ENCODE measurements at regions of chr16 and their contacts with region 1.

Region 1: DNA sequence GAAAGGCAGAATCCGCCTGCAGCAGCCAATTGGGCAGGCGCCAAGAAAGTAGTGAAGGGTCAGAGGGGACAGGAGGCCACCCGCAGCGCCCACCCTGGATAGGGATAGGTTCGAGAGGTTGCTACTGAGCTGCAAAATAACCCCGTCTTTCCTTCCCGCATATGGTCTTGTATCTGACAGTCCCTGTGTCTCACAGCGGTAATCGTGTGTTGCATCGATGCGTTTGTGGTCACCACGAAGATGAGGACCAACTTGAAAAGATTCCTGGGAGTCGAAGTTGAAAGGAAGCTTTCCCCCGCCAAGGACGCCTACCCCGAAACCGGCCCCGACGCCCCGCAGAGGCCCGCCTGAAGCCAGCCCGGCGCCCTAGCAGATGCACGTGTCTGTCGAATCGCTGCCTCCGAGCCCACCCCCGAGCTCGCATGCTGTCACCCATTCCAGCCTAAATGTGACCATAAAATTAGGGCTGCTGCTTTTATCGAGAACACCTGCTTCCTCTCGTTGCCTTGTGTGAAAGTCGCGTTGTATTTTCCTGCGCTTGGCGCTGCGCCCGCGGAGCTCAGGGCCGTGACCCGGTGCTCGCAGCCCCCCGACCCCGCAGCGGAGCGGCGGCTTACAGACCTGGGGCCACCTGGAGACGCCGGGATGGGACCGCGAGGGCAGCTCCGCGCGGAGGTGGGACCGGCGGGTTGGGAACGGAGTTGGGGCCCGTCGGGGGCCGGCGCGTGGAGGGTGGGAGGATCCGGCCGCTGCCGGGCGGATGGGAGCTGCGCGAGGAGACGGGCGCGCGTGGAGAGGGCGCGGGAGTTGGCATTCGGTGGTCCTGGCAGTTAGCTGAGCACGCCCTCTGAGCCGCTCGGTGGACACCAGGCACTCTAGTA is at the start of gene CMTM2:
- DNase-seq: no peak
- H3K4me3 Mint-ChIP-seq: peak within 1 kb of the TSS; percentile 16
- H3K27ac Mint-ChIP-seq: no peak within 1 kb of the TSS
- H3K4me1 Mint-ChIP-seq: peaks cover 13% of the 10 kb centered on the region
- H3K27me3 Mint-ChIP-seq: peaks cover 40% of the 10 kb centered on the region
- total RNA-seq, gene CMTM2: 0.73 to 0.97 TPM

Region 2: DNA sequence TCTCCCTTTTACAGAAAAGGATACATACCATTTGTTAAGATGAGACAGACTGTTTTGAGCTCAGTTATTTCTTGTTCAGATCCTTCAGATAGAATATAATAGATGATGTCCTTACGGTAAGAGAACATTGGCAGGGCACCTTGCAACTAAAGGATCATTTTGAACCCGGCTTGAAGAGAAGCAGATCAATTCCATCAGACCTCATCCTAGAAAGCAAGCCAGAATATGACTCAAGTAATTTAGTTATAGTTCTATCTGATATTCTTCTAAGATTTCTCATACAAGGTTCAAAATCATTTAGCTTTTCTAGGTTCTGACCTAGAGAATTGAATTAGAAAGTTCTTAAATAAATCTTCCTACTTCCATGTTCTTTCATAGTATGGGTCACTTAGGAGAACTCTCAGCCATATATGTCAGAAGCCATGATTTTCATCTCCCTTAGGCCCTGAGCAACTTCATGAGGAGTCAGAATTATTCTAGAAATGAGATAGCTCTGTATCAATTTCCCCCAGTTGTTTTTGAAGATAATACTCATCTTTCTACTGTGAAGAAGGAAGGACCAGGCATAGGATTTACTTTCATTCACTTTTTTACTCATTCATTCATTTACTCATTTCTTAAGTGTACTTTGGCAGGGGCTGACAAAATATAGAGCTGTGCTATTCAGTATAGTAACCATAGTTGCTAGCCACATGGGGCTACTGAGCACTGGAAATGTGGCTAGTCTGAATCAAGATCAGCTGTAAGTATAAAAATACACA is 15.1 kb before region 1 on chr16:
- CTCF ChIA-PET with region 1: interaction called, 11 read pairs
- POLR2A ChIA-PET with region 1: no interaction called
- DNase-seq: no peak
- H3K4me3 Mint-ChIP-seq: no peak overlapping the region
- H3K27ac Mint-ChIP-seq: no peak overlapping the region
- H3K4me1 Mint-ChIP-seq: peaks cover 56% of the 10 kb centered on the region
- H3K27me3 Mint-ChIP-seq: no peaks in the 10 kb centered on the region

Region 3: GRCh38 chr16:66596986-66597848 is 18.3 kb after region 1 on chr16:
- CTCF ChIA-PET with region 1: no interaction called
- POLR2A ChIA-PET with region 1: no interaction called
- DNase-seq: peak; percentile 33
- H3K4me3 Mint-ChIP-seq: peak overlapping the region; percentile 42
- H3K27ac Mint-ChIP-seq: peak overlapping the region; percentile 91
- H3K4me1 Mint-ChIP-seq: peaks cover 48% of the 10 kb centered on the region
- H3K27me3 Mint-ChIP-seq: no peaks in the 10 kb centered on the region

Region 4: GRCh38 chr16:66635406-66635805 is 56.5 kb after region 1 on chr16:
- CTCF ChIA-PET with region 1: no interaction called
- POLR2A ChIA-PET with region 1: no interaction called
- DNase-seq: no peak
- H3K4me3 Mint-ChIP-seq: no peak overlapping the region
- H3K27ac Mint-ChIP-seq: no peak overlapping the region
- H3K4me1 Mint-ChIP-seq: no peaks in the 10 kb centered on the region
- H3K27me3 Mint-ChIP-seq: peaks cover 2% of the 10 kb centered on the region

Region 5: GRCh38 chr16:66649636-66650205 is 70.8 kb after region 1 on chr16:
- CTCF ChIA-PET with region 1: no interaction called
- POLR2A ChIA-PET with region 1: no interaction called
- DNase-seq: no peak
- H3K4me3 Mint-ChIP-seq: no peak overlapping the region
- H3K27ac Mint-ChIP-seq: no peak overlapping the region
- H3K4me1 Mint-ChIP-seq: peaks cover 15% of the 10 kb centered on the region
- H3K27me3 Mint-ChIP-seq: peaks cover 2% of the 10 kb centered on the region

Region 6: DNA sequence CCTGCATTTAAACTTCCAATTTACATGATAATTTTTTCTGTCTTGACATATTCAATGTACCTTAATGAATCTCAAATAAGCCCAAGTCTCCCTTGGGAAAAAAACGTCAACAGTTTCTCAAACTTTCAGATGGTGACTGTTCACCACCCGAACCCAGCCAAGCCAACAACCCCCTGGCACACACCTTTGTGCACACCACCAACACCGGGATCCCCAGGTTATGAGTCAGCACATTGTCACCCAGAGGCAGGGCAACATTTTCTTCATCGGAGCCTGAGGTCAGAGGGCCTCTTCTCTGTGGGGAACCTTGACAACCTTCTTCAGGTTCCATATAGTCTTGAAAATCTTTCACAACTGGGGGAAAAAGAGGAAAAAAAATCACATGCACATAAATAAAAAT is 157.0 kb after region 1 on chr16:
- CTCF ChIA-PET with region 1: no interaction called
- POLR2A ChIA-PET with region 1: no interaction called
- DNase-seq: no peak
- H3K4me3 Mint-ChIP-seq: no peak overlapping the region
- H3K27ac Mint-ChIP-seq: no peak overlapping the region
- H3K4me1 Mint-ChIP-seq: peaks cover 19% of the 10 kb centered on the region
- H3K27me3 Mint-ChIP-seq: no peaks in the 10 kb centered on the region